ENCODE measurements at regions of chr3 and their contacts with region 1.

Region 1: DNA sequence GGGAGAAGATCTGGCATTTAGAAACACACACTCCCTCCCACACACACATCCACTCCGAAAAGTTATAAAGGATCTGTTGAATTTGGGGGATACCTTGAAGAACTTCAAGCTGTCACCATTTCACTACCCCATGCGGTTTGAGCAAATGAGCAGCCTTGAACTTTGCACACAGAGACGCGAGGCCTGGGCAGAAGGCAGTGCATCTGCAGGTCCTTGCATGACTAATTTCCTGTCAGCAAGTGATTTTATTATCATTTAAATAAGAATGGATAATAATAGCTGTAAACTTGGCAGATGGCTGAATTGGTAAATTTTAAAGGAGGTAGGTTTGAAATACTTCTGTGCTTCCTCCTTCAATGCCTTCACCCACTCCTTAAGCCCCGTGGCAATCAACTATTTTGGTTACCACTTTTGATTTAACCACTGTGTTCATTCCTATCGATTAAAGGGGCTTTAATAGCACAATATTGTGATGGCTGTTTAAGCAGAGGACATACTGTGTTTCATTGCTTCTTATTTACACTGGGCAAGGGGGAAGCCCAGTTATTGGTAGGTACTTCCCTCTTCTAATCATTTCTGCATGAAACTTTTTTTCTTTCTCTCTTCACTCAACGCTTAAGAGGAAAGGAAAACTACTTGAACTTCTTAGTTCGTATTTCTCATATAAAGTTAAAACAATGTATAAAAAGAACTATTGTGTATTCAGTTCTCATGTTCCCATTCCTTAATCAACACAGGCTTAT is 108.1 kb downstream of the ROBO2 start:
- DNase-seq: no peak
- H3K4me3 ChIP-seq: no peak overlapping the region
- H3K27ac ChIP-seq: no peak overlapping the region
- H3K4me1 ChIP-seq: no peaks in the 10 kb centered on the region
- H3K27me3 ChIP-seq: no peaks in the 10 kb centered on the region
- CTCF ChIP-seq: no peak
- EP300 ChIP-seq: no peak
- POLR2A ChIP-seq: no peak

Region 2: DNA sequence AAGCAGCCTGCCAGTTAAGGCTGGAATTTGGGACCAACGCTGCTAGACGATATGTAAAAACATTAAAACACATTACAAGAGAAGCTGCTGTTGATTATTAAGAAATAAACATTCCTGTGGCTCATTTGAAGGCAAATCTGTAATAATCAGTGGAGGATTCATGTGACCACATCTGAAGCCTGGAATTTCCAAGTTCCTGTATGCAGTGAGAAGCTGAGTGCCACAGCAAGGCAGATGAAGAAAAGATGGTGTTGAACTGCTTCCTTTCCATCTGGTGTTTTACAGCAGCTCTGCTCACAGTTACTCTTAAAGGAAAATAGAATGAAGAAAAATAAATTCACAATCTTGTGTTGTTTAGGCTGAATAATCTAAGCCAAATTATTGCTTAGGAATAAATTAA is 247.4 kb before region 1 on chr3:
- intact Hi-C with region 1: loop called (anchors 10 kb)
- DNase-seq: no peak
- H3K4me3 ChIP-seq: no peak overlapping the region
- H3K27ac ChIP-seq: no peak overlapping the region
- H3K4me1 ChIP-seq: no peaks in the 10 kb centered on the region
- H3K27me3 ChIP-seq: no peaks in the 10 kb centered on the region
- CTCF ChIP-seq: no peak
- EP300 ChIP-seq: no peak
- POLR2A ChIP-seq: no peak

Measured in stomach (tissue), 19 donors.